Right cardiac atrium (tissue), 5 donors: ENCODE measurements at regions of chr17 and their contacts with region 1.

Region 1: GRCh38 chr17:19513897-19514488 is 19.7 kb upstream of the SLC47A1 start:
- DNase-seq: peak; percentile 57 to 82 (median 82)
- ATAC-seq: peak; percentile 78 to 79
- H3K4me3 ChIP-seq: no peak overlapping the region
- H3K27ac ChIP-seq: peak overlapping the region; percentile 74
- H3K4me1 ChIP-seq: no peaks in the 10 kb centered on the region
- H3K27me3 ChIP-seq: no peaks in the 10 kb centered on the region

Region 2: DNA sequence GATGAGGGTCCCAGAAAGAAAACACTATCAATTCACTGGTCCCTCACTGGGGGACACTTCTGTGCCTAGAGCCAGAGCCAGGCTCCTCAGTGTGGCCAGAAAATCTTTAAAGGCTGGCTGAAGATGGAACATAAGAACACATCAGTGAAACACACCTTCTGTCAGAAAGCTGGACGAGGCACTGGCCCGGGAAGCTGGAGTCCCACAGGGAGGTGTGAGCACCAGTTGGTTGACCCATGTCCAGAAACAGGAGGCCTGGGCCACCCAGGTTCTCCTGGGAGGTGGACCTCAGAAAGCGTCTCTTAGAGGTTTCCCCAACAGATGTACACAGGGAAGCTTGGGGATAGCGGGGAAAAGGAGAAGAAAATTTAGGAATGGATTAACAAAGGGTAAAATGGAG is 78.3 kb after region 1 on chr17:
- intact Hi-C with region 1: no loop called
- DNase-seq: no peak
- ATAC-seq: no peak
- H3K4me3 ChIP-seq: no peak overlapping the region
- H3K27ac ChIP-seq: no peak overlapping the region
- H3K4me1 ChIP-seq: no peaks in the 10 kb centered on the region
- H3K27me3 ChIP-seq: no peaks in the 10 kb centered on the region

Region 3: DNA sequence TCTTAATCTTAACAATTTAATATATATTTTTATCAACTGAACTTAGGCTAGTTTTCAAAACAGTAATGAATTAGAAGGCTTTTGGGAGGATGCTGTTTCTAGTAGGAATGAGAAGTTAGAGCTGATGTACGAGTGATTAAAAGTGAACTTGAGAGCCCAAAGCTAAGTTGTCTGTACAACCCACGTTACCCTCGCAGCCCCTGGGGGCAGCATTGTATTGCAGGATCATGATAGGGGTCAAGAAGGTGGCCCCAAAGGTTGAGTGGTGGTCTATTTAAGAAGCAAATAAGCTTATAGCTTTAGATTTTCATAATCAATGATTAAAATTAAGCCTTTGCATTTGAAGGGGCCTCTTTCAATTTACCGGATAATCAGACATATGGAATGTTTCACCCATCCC is 100.9 kb after region 1 on chr17:
- intact Hi-C with region 1: no loop called
- DNase-seq: no peak
- ATAC-seq: no peak
- H3K4me3 ChIP-seq: no peak overlapping the region
- H3K27ac ChIP-seq: no peak overlapping the region
- H3K4me1 ChIP-seq: no peaks in the 10 kb centered on the region
- H3K27me3 ChIP-seq: no peaks in the 10 kb centered on the region

Region 4: DNA sequence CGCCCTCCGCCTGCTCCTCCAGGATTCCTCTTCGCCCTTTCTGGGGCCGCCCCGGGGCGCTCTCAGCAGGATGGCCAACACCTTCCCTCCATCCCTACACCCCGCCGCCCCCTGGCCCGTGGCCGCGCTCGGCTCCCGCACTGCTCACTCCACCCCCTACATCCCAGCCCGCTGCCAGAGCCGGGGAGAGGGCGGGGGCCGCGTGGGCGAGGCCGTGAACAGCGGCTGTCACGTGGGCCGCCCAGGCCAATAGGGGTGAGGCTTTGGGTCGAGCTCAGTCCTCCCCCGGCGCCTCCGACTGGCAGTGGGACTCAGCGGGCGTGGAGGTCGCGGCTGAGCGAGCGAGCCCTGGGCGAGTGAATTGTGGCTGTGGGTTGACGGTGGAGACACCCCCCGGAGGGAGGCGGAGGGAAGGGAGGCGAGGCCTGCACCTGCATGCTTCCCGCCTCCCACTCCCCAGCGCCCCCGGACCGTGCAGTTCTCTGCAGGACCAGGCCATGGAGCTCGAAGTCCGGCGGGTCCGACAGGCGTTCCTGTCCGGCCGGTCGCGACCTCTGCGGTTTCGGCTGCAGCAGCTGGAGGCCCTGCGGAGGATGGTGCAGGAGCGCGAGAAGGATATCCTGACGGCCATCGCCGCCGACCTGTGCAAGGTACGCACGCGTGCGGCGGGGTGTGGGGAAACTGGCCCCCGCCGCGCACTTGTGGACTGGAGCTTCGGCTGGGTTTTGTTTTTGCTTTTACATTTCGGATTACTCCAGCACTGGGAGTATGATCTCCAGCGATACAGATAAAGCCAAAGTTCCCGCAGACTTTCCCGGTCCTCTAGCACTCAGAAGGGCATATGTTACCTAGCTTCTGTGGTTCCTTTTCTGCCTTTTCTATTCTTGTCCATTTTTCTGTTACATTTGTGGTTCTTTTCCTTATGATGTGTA is 134.7 kb after region 1 on chr17 and contains the start of gene ALDH3A2:
- intact Hi-C with region 1: loop called in 2 of 4 experiments (anchors 10 kb)
- DNase-seq: peak; percentile 98 to 99 (median 99)
- ATAC-seq: peak; percentile 100
- H3K4me3 ChIP-seq: peak within 1 kb of the TSS; percentile 77
- H3K27ac ChIP-seq: peak within 1 kb of the TSS; percentile 96
- H3K4me1 ChIP-seq: peaks cover 7% of the 10 kb centered on the region
- H3K27me3 ChIP-seq: no peaks in the 10 kb centered on the region
- total RNA-seq, gene ALDH3A2: 34.1 to 51.9 (median 43.4) TPM